ENCODE measurements at regions of chr9 and their contacts with region 1.

Region 1: DNA sequence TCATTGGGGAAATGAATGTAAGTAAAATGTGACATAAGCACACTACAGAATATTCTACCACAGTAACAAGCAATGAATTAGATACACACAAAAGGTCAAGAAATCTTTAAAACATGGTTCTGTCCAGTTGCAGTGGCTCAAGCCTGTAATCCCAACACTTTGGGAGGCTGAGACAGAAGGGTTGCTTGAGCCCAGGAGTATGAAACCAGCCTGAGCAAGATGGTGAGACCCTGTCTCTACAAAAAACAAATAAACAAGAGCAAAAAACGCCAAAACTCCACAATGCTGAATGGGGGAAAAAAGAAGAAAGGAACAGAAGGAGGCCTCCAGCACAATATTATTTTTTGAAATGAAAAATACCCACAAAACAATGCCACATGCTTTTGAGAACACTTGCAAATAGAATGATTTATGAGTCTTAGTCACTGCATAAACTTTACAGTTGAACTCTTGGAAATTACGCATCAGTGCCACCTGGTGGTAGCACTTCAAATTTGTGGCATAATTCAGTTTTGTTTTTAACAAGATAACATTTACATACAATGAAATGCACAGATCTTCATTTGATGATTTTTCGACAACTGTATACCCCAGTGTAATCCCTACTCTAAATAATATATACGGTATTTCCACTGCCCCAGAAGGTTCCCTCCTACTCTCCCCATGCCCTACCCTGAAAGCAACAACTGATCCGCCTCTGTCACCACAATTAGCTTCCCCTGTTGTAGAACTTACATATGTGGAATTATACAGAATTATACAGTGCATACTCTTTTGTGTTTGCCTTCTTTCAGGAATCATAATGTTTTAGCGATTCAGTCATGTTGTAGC is 14.4 kb upstream of the SPINK4 start:
- DNase-seq: peak; percentile 85
- ATAC-seq: peak; percentile 26; the same call in 1 of the 2 replicates
- H3K4me3 ChIP-seq: no peak overlapping the region
- H3K27ac ChIP-seq: peak overlapping the region; percentile 58
- H3K4me1 ChIP-seq: peaks cover 28% of the 10 kb centered on the region
- H3K27me3 ChIP-seq: no peaks in the 10 kb centered on the region
- CTCF ChIP-seq: peak; percentile 72

Region 2: DNA sequence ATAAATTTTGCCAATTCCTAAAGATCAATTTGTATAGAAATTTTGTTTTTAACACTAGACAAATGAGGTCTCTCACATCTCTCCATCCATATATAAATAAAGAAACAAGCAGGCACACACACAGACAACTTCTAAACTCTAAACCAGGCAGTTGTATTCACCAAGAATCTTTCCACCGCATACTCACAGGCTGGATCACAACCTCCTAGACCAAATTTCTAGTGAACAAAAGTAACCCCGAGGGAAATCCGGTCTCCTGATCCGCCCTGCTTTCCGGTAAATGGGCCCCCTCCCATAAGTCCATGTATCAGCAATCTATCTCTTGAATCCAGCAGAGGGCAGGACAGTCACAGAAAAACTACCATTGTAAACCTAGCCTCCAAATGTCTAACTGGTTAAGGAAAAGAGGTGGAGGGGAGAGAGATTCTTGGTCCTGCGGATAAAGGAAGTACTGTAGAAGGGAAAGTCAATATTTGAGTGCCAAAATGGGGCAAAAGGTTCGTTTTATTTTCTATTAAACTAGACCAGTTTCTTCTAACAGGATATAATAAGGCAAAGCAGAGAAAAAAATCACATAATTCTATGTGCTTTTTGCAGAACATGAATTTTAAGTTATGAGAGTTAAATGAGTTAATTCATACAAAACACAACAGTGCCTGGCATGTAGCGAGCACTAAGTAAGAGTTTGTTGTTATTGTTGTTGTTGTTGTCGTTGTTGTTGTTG is 144.2 kb before region 1 on chr9:
- CTCF ChIA-PET with region 1: no interaction called
- POLR2A ChIA-PET with region 1: no interaction called
- intact Hi-C with region 1: loop called (anchors 1 kb)
- DNase-seq: peak; percentile 80
- ATAC-seq: peak; percentile 69
- H3K4me3 ChIP-seq: peak overlapping the region; percentile 41; the same call in 1 of the 2 replicates
- H3K27ac ChIP-seq: no peak overlapping the region
- H3K4me1 ChIP-seq: peaks cover 10% of the 10 kb centered on the region
- H3K27me3 ChIP-seq: no peaks in the 10 kb centered on the region
- CTCF ChIP-seq: peak; percentile 85

Region 3: DNA sequence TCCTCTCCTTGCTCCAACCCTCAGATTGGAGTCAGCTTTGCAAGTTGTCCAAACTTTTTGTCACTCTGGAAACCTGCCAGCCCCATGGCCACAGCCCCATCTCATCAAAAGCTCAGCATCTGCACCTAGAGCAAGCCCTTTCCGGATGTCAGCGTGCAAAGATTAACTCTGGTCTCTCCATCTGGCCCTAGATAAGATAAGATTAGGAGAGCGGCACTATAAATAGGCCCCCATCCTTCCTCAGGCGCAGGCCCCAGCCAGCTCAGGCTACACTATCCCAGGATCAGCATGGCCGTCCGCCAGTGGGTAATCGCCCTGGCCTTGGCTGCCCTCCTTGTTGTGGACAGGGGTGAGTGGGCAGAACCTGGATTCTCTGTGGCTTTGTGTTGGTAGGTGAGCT is 14.4 kb after region 1 on chr9 and contains the start of gene SPINK4:
- CTCF ChIA-PET with region 1: no interaction called
- POLR2A ChIA-PET with region 1: no interaction called
- intact Hi-C with region 1: no loop called
- DNase-seq: no peak
- ATAC-seq: no peak
- H3K4me3 ChIP-seq: no peak within 1 kb of the TSS
- H3K27ac ChIP-seq: no peak within 1 kb of the TSS
- H3K4me1 ChIP-seq: peaks cover 3% of the 10 kb centered on the region
- H3K27me3 ChIP-seq: no peaks in the 10 kb centered on the region
- CTCF ChIP-seq: no peak
- total RNA-seq, gene SPINK4: not detected in 2 replicates